Adrenal gland (tissue), 19 donors: ENCODE measurements at regions of chr14 and their contacts with region 1.

Region 1: DNA sequence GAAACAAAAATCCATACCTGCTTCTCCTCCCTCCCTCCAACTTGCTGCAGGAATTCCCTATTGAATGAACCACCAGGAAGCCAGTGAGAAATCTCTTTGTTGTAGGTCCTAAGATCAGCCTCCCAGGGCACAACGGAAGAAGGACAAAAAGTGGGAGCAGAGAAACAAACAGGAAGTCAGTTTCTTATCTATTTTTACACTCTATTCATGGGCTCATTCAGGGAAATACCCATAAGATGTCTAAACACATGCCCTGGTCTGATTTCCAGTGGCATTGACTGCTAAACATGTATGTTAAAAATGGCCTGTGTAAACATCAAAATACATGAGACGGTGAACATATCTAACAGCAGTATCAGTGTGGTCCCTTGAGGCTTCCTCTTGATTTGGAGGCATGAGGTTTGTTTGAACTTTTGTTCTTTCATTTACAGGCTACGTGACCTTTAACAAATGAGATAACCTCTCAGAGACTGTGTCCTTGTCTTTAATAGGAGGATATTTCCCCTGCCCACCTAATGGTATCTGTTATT is 18.8 kb downstream of the GPR65 start:
- DNase-seq: no peak
- H3K4me3 ChIP-seq: no peak overlapping the region
- H3K27ac ChIP-seq: no peak overlapping the region
- H3K4me1 ChIP-seq: peaks cover 0 to 13% of the 10 kb centered on the region in 2 donors
- H3K27me3 ChIP-seq: no peaks in the 10 kb centered on the region
- CTCF ChIP-seq: no peak
- POLR2A ChIP-seq: no peak

Region 2: DNA sequence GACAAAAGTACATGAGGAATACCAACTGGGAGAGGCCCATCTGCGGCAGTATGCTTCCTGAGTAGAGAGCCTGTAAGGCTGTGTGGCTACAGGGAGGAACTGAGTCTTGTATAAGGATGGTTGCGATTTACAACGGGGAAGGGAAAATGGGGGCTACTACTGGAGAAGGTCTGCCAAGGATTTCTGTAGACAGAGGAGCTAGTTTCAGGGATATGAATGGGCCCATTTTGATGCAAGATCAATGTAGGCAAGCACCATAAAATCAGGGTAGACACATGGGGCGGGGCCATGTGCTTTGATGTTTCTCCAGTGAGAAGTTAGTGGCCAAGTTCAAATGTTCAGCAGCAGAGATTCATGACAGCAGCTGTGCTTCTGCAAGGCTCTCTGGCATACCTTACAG is 130.6 kb after region 1 on chr14:
- intact Hi-C with region 1: loop called in 1 of 2 experiments (anchors 10 kb)
- DNase-seq: no peak
- H3K4me3 ChIP-seq: no peak overlapping the region
- H3K27ac ChIP-seq: no peak overlapping the region
- H3K4me1 ChIP-seq: no peaks in the 10 kb centered on the region
- H3K27me3 ChIP-seq: no peaks in the 10 kb centered on the region
- CTCF ChIP-seq: no peak
- POLR2A ChIP-seq: no peak